Left lung (tissue), 14 donors: ENCODE measurements at regions of chr9 and their contacts with region 1.

Region 1: GRCh38 chr9:133532937-133533668 is 1.4 kb upstream of the ADAMTSL2 start:
- DNase-seq: peak in 2 of 4 donors; percentile 48 to 53
- ATAC-seq: peak; percentile 74
- H3K4me3 ChIP-seq: no peak overlapping the region
- H3K27ac ChIP-seq: no peak overlapping the region
- H3K4me1 ChIP-seq: peaks cover 14 to 24% of the 10 kb centered on the region in 2 donors
- H3K27me3 ChIP-seq: peaks cover 10 to 65% of the 10 kb centered on the region in 2 donors
- CTCF ChIP-seq: peak; percentile 25 to 37

Region 2: GRCh38 chr9:133715866-133716563 is 182.9 kb after region 1 on chr9:
- intact Hi-C with region 1: loop called in 1 of 2 experiments (anchors 10 kb)
- DNase-seq: peak in 2 of 4 donors; percentile 34 to 66
- ATAC-seq: peak; percentile 10
- H3K4me3 ChIP-seq: no peak overlapping the region
- H3K27ac ChIP-seq: peak overlapping the region in 1 of 2 donors; percentile 28
- H3K4me1 ChIP-seq: peaks cover 6 to 14% of the 10 kb centered on the region in 2 donors
- H3K27me3 ChIP-seq: no peaks in the 10 kb centered on the region
- CTCF ChIP-seq: peak in 1 of 2 donors; percentile 17